ENCODE measurements at regions of chr7 and their contacts with region 1.

Region 1: GRCh38 chr7:4973728-4974198 is 14.8 kb upstream of the MMD2 start:
- DNase-seq: peak; percentile 99
- H3K4me3 Mint-ChIP-seq: peak overlapping the region; percentile 96
- H3K27ac Mint-ChIP-seq: peak overlapping the region; percentile 94
- H3K4me1 Mint-ChIP-seq: peaks cover 12% of the 10 kb centered on the region
- H3K27me3 Mint-ChIP-seq: no peaks in the 10 kb centered on the region

Region 2: GRCh38 chr7:4958477-4959301 is 15.1 kb before region 1 on chr7 and contains the start of gene MMD2:
- intact Hi-C with region 1: no loop called
- DNase-seq: no peak
- H3K4me3 Mint-ChIP-seq: peak within 1 kb of the TSS; percentile 17
- H3K27ac Mint-ChIP-seq: no peak within 1 kb of the TSS
- H3K4me1 Mint-ChIP-seq: no peaks in the 10 kb centered on the region
- H3K27me3 Mint-ChIP-seq: peaks cover 19% of the 10 kb centered on the region
- total RNA-seq, gene MMD2: not detected in 2 replicates

Region 3: DNA sequence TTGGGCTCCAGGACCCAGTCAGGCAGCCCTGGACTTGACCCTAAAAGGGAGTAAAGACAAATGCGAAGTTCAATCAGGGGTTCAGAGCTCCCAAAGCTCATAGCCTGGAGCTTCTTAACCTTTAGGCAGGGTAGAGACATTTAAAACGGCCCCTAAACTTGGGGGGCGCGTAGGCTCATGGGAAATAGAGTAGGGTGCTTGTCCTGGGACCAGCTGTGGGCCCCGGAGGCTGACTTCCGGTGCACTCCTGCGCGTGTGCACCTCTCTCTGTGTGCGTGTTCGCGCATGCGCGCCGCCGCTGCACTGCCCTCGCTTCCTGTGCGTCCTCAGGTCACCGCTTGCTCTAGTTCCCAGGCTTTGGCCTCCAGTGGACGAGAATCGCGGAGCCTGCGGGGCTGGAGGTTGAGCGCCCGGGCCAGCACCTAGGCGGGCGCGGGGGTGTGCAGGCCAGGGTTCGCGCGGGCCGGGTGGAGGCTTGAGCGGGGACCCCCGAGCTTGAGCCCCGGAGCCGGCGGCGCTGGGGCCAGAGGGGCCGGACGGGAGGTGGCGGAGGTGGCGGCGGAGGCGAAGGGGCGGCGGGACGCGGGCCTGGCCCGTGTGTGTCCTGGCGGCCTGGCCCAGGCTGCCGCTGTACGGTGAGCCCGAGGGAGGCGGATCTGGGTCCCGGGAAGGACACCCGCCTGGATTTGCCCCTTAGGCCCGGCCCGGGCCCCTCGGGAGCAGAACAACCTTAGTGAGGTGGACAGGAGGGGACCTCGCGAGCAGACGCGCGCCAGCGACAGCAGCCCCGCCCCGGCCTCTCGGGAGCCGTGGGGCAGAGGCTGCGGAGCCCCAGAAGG is 72.0 kb after region 1 on chr7 and contains the start of gene RBAK:
- intact Hi-C with region 1: loop called (anchors 1 kb)
- DNase-seq: peak; percentile 96
- H3K4me3 Mint-ChIP-seq: peak within 1 kb of the TSS; percentile 94
- H3K27ac Mint-ChIP-seq: peak within 1 kb of the TSS; percentile 91
- H3K4me1 Mint-ChIP-seq: peaks cover 27% of the 10 kb centered on the region
- H3K27me3 Mint-ChIP-seq: no peaks in the 10 kb centered on the region
- total RNA-seq, gene RBAK: 13.6 and 14.2 TPM in 2 replicates

Region 4: GRCh38 chr7:5083311-5083711 is 109.5 kb after region 1 on chr7:
- intact Hi-C with region 1: loop called (anchors 1 kb)
- DNase-seq: no peak
- H3K4me3 Mint-ChIP-seq: no peak overlapping the region
- H3K27ac Mint-ChIP-seq: no peak overlapping the region
- H3K4me1 Mint-ChIP-seq: no peaks in the 10 kb centered on the region
- H3K27me3 Mint-ChIP-seq: peaks cover 7% of the 10 kb centered on the region

Region 5: DNA sequence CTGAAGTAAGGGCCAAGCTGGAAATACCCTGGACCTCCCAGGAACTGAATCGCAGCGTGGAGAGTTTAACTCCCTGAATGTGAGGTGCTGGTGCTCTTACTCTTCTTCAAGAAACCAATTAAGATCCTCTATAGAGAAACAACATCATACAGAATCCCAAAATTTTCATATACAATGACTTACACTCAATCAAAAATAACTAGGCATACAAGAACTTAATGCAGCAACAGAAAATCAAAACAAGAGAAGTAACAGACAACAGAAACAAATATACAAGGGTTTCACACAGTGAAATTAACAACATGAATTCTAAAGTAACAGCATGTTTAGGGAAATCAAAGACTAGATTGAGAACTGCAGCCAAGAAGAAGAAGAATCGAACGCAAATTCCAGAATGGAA is 770.0 kb after region 1 on chr7:
- intact Hi-C with region 1: loop called (anchors 10 kb)
- DNase-seq: no peak
- H3K4me3 Mint-ChIP-seq: no peak overlapping the region
- H3K27ac Mint-ChIP-seq: no peak overlapping the region
- H3K4me1 Mint-ChIP-seq: peaks cover 4% of the 10 kb centered on the region
- H3K27me3 Mint-ChIP-seq: no peaks in the 10 kb centered on the region

Measured in activated CD4-positive, alpha-beta T cell treated with anti-CD3 and anti-CD28 coated beads, Interleukin-2, amount 10 ng/mL, durations not matched to agents 24 days and 14 days (primary cell).